Left lung (tissue), 14 donors: ENCODE measurements at regions of chr9 and their contacts with region 1.

Region 1: DNA sequence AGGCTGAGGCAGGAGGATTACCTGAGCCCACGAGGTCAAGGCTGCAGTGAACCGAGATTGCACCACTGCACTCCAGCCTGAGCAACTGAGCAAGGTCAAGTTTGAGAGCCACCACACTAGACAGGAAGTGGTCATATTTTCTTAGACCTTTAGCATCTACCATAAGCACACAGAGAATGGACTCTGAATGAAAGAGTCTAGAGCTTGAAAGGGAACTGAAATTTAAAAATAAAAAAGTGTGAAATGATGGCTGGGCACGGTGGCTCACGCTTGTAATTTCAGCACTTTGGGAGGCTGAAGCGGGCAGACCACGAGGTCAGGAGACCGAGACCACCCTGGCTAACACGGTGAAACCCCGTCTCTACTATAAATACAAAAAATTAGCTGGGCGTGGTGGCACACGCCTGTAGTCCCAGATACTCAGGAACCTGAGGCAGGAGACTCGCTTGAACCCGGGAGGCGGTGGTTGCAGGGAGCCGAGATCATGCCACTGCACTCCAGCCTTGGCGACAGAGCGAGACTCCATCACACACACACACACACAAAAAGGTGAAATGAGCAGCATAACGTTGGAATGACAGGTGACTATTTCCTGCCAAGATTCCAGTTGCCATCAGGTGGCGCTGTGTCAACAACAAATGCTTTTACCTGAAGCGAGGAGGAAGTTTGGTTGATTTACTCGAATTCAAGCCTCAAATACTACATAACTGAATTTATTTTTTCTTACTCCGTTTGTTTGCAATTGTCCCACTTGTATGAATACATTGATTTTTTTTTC is 21.3 kb upstream of the AK3 start:
- DNase-seq: peak in 3 of 4 donors; percentile 59 to 80 (median 71)
- ATAC-seq: peak; percentile 82
- H3K4me3 ChIP-seq: peak overlapping the region; percentile 18 to 23
- H3K27ac ChIP-seq: peak overlapping the region; percentile 49 to 88
- H3K4me1 ChIP-seq: peaks cover 4 to 53% of the 10 kb centered on the region in 2 donors
- H3K27me3 ChIP-seq: no peaks in the 10 kb centered on the region
- CTCF ChIP-seq: peak; percentile 70 to 78

Region 2: DNA sequence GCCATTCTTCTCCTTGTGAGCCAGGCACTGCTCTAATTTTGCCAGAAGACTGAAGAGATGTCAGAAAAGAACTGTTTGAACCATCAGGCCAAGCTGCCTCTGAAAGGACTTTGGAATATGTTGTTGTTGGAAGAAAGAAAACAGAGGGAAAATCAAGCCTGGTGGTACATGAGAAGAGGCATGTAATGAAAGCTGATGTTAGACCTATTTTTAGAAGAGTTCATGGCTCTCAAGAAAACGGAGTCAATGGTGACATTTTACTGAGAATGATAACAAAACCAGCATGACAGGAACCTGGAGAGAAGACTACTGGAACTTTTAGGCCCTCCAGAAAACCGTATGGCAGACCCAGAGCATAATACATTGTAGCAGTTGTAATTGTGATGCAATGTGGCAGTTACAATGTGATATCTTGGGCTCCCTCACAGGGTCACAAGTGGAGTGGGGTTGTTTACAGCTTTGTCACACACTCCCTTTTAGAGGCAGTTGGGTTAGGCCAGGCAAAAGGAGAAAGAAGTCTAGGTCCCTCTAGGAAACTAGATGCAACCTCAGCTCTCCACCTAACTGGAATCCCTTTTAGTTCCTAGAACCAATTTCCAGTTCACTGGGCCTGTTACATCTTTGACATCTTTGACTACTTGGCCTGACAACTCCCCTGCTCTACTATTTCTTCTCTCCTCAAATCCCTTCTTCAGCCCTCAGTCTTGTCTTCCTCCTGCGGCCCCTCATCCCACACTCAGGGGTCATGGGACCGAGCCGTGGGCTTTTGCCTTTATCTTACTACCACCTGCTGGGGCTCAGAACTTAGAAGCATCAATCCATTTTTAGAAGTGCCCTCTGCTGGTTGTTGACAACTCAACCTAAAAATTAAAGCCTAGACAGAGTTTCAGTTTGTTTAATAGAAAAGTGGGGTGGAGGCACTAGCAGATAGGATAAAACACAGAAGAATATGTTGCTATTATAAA is 161.6 kb after region 1 on chr9:
- intact Hi-C with region 1: loop called in 1 of 2 experiments (anchors 5 kb)
- DNase-seq: no peak
- ATAC-seq: peak; percentile 44
- H3K4me3 ChIP-seq: no peak overlapping the region
- H3K27ac ChIP-seq: peak overlapping the region in 1 of 2 donors; percentile 1
- H3K4me1 ChIP-seq: peaks cover 0 to 14% of the 10 kb centered on the region in 2 donors
- H3K27me3 ChIP-seq: no peaks in the 10 kb centered on the region
- CTCF ChIP-seq: peak in 1 of 2 donors; percentile 27

Region 3: DNA sequence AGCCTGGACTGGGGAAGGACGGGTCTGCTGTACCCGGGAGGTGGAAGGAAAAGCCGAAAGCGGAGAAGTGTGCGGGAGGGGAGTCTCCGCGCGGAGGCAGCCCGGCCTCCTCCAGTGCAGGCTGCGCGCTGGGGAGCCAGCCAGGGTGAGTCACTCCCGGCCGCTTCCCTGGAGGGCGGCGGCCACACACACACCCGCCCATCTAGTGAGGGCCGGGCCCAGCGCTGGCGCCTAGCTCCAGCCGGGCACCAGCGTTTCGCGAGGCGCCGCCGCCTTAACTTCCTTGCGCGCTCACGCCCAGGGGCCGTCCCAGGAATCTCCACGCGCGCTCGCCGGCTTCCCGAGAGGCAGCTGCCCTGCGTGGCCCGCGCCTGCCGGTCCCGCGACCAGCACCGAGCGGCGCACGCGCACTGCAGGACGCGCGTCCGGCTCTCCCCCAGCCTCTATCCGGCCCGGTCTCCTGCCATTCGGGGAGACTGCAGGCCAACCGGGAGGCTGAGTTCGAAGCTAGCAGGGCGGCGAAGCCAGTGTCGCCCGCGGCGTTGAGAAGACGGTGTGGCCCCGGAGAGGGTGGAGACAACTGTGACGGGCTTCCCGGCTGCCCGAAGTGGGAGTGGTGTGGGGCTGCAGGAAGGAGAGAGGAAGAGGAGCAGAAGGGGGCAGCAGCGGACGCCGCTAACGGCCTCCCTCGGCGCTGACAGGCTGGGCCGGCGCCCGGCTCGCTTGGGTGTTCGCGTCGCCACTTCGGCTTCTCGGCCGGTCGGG is 222.5 kb after region 1 on chr9 and contains the start of gene JAK2:
- intact Hi-C with region 1: loop called in 1 of 2 experiments (anchors 5 kb)
- DNase-seq: peak; percentile 91 to 99 (median 94)
- ATAC-seq: peak; percentile 93
- H3K4me3 ChIP-seq: peak within 1 kb of the TSS; percentile 81 to 94
- H3K27ac ChIP-seq: peak within 1 kb of the TSS; percentile 98 to 100
- H3K4me1 ChIP-seq: peaks cover 20 to 53% of the 10 kb centered on the region in 2 donors
- H3K27me3 ChIP-seq: no peaks in the 10 kb centered on the region
- CTCF ChIP-seq: peak in 1 of 2 donors; percentile 29
- polyA plus RNA-seq, gene JAK2: 13.6 to 16.4 (median 15.3) TPM